PC-3 (cell line): ENCODE measurements at regions of chr11 and their contacts with region 1.

Region 1: GRCh38 chr11:66288671-66289547 is at the start of gene YIF1A:
- DNase-seq: peak; percentile 100
- ATAC-seq: peak; percentile 97
- H3K4me3 ChIP-seq: peak within 1 kb of the TSS; percentile 90
- H3K27ac ChIP-seq: peak within 1 kb of the TSS; percentile 70
- H3K4me1 ChIP-seq: peaks cover 18% of the 10 kb centered on the region
- H3K27me3 ChIP-seq: peaks cover 12% of the 10 kb centered on the region
- CTCF ChIP-seq: no peak
- total RNA-seq, gene YIF1A: 196 and 236 TPM in 2 replicates

Region 2: DNA sequence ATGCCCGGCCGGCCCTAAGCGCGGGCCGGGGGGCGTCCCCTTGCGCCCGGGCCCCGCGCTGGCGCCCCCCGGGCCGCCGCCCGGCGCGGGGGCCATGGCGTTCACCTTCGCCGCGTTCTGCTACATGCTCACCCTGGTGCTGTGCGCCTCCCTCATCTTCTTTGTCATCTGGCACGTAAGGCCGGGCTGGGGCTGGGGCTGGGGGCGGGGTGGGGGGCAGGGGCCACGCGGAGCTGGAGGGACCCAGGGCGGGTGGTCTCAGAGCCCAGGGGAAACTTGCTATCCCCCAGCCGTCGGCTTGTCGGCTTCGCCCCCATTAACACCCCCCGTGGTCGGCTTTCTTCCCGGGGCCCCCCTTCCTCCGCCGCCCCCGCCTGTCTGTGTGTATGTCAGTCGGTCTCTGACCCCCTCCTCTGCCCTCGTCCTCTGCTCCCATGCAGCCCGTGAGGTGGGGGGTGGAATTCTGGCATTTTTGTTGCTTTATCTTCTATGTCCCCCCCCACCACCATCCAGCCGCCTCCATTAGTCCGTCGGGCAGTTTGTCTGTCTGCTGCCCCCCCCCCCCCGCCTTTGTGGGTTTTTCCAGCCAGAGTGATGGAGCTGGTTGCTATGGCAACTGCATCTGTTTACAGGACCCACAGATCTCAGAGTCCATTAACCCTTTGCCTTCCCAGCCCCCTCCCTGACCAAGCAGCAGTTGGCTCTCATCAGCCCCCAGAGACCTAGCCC is 10.4 kb before region 1 on chr11:
- CTCF ChIA-PET with region 1: no interaction called
- POLR2A ChIA-PET with region 1: interaction called, 13 read pairs
- intact Hi-C with region 1: no loop called
- DNase-seq: peak; percentile 18
- ATAC-seq: no peak; the same call in 1 of the 2 replicates
- H3K4me3 ChIP-seq: no peak overlapping the region
- H3K27ac ChIP-seq: no peak overlapping the region
- H3K4me1 ChIP-seq: peaks cover 9% of the 10 kb centered on the region; the same call in 1 of the 2 replicates
- H3K27me3 ChIP-seq: no peaks in the 10 kb centered on the region
- CTCF ChIP-seq: no peak

Region 3: DNA sequence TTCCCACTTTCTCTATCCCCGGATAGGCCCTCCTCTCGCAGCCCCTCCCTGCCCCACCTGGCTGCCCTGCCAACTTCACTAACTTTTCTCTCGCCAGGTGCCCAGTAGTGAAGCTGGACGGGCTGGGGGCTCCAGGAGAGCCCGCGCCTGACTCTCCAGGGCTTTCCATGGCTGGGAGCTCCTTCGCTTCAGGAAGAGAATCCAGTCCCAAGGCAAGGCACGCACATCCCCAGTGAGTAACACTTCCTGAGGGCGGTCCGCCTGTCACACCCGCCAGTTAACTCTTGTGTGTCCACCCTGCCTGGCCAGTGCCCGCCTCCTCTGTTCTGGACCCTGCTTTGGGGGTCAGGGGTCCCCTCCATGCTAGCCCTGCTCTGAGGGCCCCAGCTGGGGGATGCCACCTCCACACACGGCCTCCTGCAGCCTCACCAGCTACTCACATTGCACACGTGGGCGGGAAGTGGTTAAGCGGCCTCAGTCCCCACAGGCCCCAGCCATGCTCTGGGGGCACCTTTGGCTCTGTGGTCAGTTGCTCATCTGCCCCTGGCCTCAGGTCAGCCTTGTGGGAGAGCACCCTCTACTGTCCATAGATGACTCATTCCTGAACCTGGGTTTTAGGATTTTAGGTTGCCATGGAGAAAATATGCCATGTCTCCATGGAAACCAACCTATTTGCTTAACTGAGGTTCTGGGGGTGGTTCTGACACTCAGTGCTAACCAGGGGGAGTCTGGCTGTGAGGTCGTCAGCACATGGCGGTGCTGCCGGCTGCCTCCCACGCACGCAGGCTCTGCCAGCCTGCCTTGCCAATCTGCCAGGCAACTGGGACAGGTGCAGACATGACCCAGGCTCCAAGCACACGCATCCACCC is 47.6 kb after region 1 on chr11 and contains the start of gene RIN1:
- CTCF ChIA-PET with region 1: interaction called, 5 read pairs
- POLR2A ChIA-PET with region 1: interaction called, 11 read pairs
- intact Hi-C with region 1: no loop called
- DNase-seq: peak; percentile 95
- ATAC-seq: peak; percentile 80
- H3K4me3 ChIP-seq: peak within 1 kb of the TSS; percentile 81
- H3K27ac ChIP-seq: peak within 1 kb of the TSS; percentile 96
- H3K4me1 ChIP-seq: peaks cover 31% of the 10 kb centered on the region
- H3K27me3 ChIP-seq: no peaks in the 10 kb centered on the region
- CTCF ChIP-seq: peak; percentile 44
- total RNA-seq, gene RIN1: 41.2 and 71.8 TPM in 2 replicates